ENCODE measurements at regions of chr16 and their contacts with region 1.

Region 1: DNA sequence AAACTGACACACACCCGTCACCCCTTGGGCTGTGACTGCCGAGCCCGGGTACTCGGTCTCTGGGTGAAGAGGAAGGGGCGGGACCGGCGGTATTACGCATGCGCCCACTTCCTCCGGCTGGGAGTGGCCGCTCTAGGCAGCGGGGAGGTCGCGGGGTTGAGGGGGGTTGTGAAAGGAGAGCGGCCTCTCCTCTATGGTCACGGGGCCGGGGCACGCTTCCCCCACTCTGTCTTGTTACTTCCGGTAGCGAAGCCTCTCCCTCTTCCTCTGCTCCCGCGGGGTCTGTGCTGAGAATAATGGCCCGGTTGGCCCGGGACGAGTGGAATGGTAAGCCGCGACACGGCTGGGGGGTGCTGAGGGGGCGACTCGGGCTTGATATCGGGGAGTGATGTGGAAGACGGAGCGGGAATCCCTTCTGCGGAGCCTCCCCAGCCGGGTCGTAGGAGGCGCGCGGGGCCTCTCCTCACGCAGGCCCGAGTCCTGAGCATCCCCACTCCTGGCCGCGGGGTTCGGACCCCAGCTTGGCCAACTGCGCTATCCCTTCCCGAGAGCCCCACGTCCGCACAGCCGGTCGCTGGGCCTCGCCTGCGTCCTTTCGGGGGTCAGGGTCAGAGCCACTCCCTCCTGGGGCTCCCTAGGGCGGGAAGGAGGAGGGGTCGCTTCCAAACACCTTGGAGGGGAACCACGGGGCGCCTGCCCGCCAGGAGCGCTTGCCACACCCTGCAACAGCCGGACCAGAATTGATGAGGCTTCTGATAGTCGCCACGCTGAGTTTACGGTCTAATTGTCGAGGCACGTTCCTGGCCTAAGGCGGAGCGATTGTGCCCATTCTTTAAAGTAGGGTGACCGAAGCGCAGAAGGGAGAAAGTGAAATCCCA is at the start of gene BFAR:
- DNase-seq: peak; percentile 97
- H3K4me3 ChIP-seq: peak within 1 kb of the TSS; percentile 77 to 93 (median 92)
- H3K27ac ChIP-seq: peak within 1 kb of the TSS; percentile 97
- H3K4me1 ChIP-seq: peaks cover 41% of the 10 kb centered on the region
- H3K27me3 ChIP-seq: no peaks in the 10 kb centered on the region
- CTCF ChIP-seq: no peak
- total RNA-seq, gene BFAR: 71.6 to 86.5 TPM

Region 2: GRCh38 chr16:14650629-14651028 is 17.7 kb after region 1 on chr16:
- CTCF ChIA-PET with region 1: no interaction called
- dilution Hi-C with region 1: no loop called
- in situ Hi-C with region 1: no loop called
- intact Hi-C with region 1: loop called (anchors 2 kb)
- DNase-seq: peak; percentile 75
- H3K4me3 ChIP-seq: no peak overlapping the region
- H3K27ac ChIP-seq: peak overlapping the region; percentile 36
- H3K4me1 ChIP-seq: peaks cover 15% of the 10 kb centered on the region
- H3K27me3 ChIP-seq: no peaks in the 10 kb centered on the region
- CTCF ChIP-seq: no peak

Region 3: DNA sequence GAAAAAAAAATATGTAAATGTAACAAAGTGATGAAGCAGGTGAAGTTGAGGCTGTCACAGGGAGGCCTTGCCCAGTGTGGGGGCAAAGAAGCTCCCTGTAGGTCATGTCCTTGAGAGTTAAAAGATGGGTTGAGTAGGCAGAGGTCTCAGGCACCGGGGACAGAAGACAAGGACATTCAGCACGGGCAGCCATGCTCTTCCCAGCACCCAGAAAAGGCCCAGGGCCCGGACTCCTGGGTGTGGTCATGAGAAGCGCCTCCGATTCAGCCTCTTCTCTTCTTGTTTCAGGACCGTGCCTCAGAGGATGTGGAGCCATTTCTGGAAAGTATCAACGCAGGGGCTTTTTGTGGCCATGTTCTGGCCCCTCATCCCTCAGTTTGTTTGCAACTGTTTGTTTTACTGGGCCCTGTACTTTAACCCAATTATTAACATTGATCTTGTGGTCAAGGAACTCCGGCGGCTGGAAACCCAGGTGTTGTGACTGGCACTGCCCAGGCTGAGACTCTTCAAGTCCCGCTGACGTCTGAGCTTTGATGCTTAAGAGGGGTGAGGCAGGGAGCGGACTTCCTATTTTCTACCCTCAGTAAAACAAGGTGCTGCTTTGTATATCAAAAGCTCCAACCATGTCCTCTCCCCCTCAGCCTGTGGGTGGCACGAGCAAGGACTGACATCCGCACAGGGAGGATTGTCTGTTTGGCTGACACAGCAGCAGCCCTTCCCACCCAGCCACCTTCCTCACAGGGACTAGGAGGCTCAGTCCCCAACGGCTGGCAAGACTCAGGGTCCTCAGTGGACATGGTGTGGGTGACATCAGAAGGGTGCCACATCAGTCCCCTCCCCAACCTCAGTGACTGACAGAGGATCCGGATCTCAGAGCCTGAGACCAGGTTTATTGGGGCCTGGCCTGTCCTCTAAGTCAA is 34.7 kb after region 1 on chr16:
- CTCF ChIA-PET with region 1: no interaction called
- dilution Hi-C with region 1: no loop called
- in situ Hi-C with region 1: no loop called
- intact Hi-C with region 1: no loop called
- DNase-seq: no peak
- H3K4me3 ChIP-seq: no peak overlapping the region
- H3K27ac ChIP-seq: no peak overlapping the region
- H3K4me1 ChIP-seq: no peaks in the 10 kb centered on the region
- H3K27me3 ChIP-seq: no peaks in the 10 kb centered on the region
- CTCF ChIP-seq: no peak